ENCODE measurements at regions of chr10 and their contacts with region 1.

Region 1: GRCh38 chr10:131900350-131901146 is at the start of gene PPP2R2D:
- DNase-seq: peak; percentile 83
- ATAC-seq: peak; percentile 95
- H3K4me3 ChIP-seq: peak within 1 kb of the TSS; percentile 65
- H3K27ac ChIP-seq: peak within 1 kb of the TSS; percentile 76
- H3K4me1 ChIP-seq: peaks cover 10% of the 10 kb centered on the region
- H3K27me3 ChIP-seq: peaks cover 25% of the 10 kb centered on the region
- CTCF ChIP-seq: no peak
- POLR2A ChIP-seq: no peak
- RAD21 ChIP-seq: no peak
- total RNA-seq, gene PPP2R2D: 21.1 and 23.8 TPM in 2 replicates

Region 2: DNA sequence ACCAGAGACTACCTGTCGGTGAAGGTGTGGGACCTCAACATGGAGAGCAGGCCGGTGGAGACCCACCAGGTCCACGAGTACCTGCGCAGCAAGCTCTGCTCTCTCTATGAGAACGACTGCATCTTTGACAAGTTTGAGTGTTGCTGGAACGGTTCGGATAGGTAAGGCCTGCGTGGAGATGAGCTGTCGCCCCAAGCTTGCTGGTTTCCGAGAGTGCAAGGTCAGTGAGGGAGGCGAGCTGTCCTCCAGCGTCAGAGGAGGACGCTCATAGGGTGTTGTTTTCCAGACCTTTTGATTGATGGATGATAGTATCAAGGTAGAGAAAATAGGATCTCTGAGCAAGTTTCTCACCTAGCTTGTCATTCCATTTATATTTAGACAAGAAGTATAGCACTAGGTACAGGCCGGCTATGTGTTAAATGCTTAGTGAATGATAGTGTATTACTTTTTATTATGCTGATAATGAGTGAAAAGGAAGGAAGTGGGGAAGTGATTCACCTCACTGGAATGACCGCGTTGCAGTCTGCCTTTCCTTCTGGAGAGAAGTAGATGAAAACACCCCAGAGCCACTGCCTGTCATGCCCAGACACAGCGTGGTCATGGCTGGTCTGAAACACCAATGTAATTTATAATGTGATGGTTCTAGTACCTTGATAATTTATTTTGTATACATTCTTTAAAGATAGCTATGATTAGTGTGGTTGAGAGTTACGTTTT is 47.2 kb after region 1 on chr10:
- CTCF ChIA-PET with region 1: interaction called, 3 read pairs
- POLR2A ChIA-PET with region 1: no interaction called
- dilution Hi-C with region 1: no loop called
- in situ Hi-C with region 1: no loop called
- intact Hi-C with region 1: loop called (anchors 5 kb)
- DNase-seq: peak; percentile 78
- ATAC-seq: peak; percentile 83
- H3K4me3 ChIP-seq: no peak overlapping the region
- H3K27ac ChIP-seq: peak overlapping the region; percentile 64
- H3K4me1 ChIP-seq: peaks cover 21% of the 10 kb centered on the region
- H3K27me3 ChIP-seq: no peaks in the 10 kb centered on the region
- CTCF ChIP-seq: no peak
- POLR2A ChIP-seq: no peak
- RAD21 ChIP-seq: no peak